CD8-positive, alpha-beta T cell (primary cell): ENCODE measurements at regions of chr1 and their contacts with region 1.

Region 1: GRCh38 chr1:33036526-33037503 is at the start of gene AK2:
- DNase-seq: peak; percentile 72 to 95 (median 86)
- ATAC-seq: peak; percentile 99
- H3K4me3 ChIP-seq: peak within 1 kb of the TSS; percentile 87 to 92
- H3K4me3 Mint-ChIP-seq: peak within 1 kb of the TSS; percentile 98
- H3K27ac ChIP-seq: peak within 1 kb of the TSS; percentile 57 to 76
- H3K27ac Mint-ChIP-seq: peak within 1 kb of the TSS; percentile 92
- H3K4me1 ChIP-seq: peaks cover 24% of the 10 kb centered on the region
- H3K4me1 Mint-ChIP-seq: peaks cover 45% of the 10 kb centered on the region
- H3K27me3 ChIP-seq: no peaks in the 10 kb centered on the region
- H3K27me3 Mint-ChIP-seq: no peaks in the 10 kb centered on the region
- CTCF ChIP-seq: no peak
- total RNA-seq, gene AK2: 24.3 to 24.9 TPM

Region 2: DNA sequence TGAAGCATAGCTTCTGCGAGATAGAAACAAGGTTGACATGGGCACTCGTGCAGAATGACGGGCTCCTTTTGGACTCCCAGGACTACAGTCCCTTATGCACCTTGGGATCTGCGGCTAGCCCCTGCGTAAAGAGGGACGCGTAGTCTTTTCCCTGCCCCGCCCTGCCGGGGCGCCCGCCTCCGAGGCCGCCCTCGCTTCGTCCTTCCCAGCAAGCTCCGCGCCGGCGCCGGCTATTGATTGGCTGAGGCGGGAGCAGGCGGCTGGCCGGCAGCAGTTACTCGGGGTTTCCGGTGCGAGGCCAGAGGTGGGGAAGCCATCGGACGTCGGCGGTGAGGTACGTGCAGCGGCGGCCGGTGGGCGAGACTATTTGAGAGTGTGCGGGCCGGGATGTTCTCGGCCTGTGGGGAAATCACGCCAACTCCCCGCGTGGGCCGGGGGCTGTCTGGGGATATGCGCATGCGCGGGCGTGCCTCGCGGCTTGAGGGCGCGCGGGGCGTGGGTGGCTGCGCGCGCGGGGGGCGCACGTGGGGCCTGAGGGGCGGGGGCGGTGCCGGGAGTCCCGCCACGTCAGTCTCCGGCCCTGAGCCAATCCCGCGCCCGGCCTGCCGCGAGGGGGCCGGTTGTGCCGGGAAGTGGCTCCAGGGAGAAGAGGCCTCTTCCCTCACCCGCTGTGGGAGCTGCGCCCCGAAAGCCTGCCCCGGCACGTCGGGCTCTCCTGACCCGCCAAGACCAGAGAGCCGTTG is 857.2 kb before region 1 on chr1 and contains the start of gene TXLNA:
- CTCF ChIA-PET with region 1: no interaction called
- POLR2A ChIA-PET with region 1: no interaction called
- intact Hi-C with region 1: loop called in 1 of 2 experiments (anchors 5 kb)
- DNase-seq: peak; percentile 66 to 93 (median 88)
- ATAC-seq: peak; percentile 88
- H3K4me3 ChIP-seq: peak within 1 kb of the TSS; percentile 67 to 85
- H3K4me3 Mint-ChIP-seq: peak within 1 kb of the TSS; percentile 84
- H3K27ac ChIP-seq: peak within 1 kb of the TSS; percentile 70 to 89
- H3K27ac Mint-ChIP-seq: peak within 1 kb of the TSS; percentile 93
- H3K4me1 ChIP-seq: peaks cover 26% of the 10 kb centered on the region
- H3K4me1 Mint-ChIP-seq: peaks cover 44% of the 10 kb centered on the region
- H3K27me3 ChIP-seq: no peaks in the 10 kb centered on the region
- H3K27me3 Mint-ChIP-seq: no peaks in the 10 kb centered on the region
- CTCF ChIP-seq: no peak
- total RNA-seq, gene TXLNA: 7.5 to 8.9 TPM

Region 3: DNA sequence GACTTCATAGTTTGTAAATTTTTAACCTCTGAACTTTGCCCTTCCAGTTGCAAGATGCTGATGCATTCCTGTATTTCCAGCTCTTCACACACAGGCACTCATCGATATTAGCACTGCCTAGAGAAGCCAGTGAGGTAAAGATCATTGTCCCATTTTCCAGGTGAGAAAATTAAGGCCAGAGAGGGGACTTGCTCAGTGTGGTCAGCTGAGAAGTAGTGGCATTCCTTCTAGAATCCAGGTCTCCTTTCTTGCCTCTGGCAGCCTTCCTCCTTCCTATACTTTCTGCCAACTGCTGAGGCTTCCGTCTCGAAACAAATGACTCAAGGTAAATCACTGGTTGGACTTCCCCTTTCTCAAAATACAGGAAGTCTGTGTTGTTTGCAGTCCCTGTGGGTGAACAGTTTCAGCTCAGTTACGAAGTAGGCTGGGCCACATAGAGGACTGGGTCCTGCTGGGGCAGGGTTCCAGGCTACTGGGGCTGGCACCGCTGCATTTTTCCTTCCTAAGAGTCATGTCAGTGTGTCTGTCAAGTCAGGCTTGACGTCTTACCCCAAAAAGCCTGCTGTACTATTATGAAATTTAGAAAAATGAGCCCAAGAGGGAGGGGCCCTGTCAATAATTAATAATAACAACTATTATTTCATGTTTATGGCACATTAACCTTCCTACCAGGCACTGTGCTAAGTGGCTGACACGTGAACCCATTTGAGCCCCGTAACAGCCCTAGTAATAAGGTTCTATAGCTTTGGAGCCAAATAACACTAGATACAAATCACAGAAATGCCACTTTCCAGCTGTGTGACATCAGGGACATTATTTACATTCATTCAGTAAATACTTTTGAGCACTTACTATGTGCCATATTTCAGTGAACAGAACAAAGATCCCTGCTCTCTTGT is 55.6 kb before region 1 on chr1:
- CTCF ChIA-PET with region 1: no interaction called
- POLR2A ChIA-PET with region 1: no interaction called
- intact Hi-C with region 1: loop called in 1 of 2 experiments (anchors 1 kb)
- DNase-seq: peak; percentile 23 to 90 (median 64)
- ATAC-seq: peak; percentile 98
- H3K4me3 ChIP-seq: peak overlapping the region; percentile 40
- H3K4me3 Mint-ChIP-seq: peak overlapping the region; percentile 68
- H3K27ac ChIP-seq: peak overlapping the region; percentile 49 to 94
- H3K27ac Mint-ChIP-seq: peak overlapping the region; percentile 90
- H3K4me1 ChIP-seq: peaks cover 18% of the 10 kb centered on the region
- H3K4me1 Mint-ChIP-seq: peaks cover 29% of the 10 kb centered on the region
- H3K27me3 ChIP-seq: no peaks in the 10 kb centered on the region
- H3K27me3 Mint-ChIP-seq: no peaks in the 10 kb centered on the region
- CTCF ChIP-seq: no peak

Region 4: DNA sequence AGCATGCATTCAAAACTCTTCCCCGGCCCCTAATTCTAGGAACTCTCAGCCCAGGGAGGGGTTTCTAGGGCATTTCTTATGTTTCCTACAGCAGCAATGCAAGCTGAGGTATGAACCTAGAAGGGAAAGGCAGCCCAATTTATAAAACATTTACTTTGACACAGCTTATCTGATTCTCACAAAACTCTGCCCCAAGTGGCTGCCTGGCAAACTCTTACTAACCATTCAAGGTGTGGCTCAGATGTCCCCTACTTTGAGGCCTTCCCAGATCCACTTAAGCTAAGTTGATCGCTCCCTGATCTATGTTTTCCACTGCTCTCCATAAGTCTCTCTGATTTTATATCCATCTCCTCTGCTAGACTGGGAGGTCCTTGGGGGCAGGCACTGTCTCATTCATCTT is 35.5 kb before region 1 on chr1:
- CTCF ChIA-PET with region 1: no interaction called
- POLR2A ChIA-PET with region 1: no interaction called
- intact Hi-C with region 1: no loop called
- DNase-seq: peak in 1 of 9 experiments; percentile 22
- ATAC-seq: no peak
- H3K4me3 ChIP-seq: no peak overlapping the region
- H3K4me3 Mint-ChIP-seq: no peak overlapping the region
- H3K27ac ChIP-seq: no peak overlapping the region
- H3K27ac Mint-ChIP-seq: no peak overlapping the region
- H3K4me1 ChIP-seq: no peaks in the 10 kb centered on the region
- H3K4me1 Mint-ChIP-seq: peaks cover 17% of the 10 kb centered on the region
- H3K27me3 ChIP-seq: no peaks in the 10 kb centered on the region
- H3K27me3 Mint-ChIP-seq: no peaks in the 10 kb centered on the region
- CTCF ChIP-seq: peak; percentile 29

Region 5: GRCh38 chr1:33094971-33095604 is 58.3 kb after region 1 on chr1:
- CTCF ChIA-PET with region 1: no interaction called
- POLR2A ChIA-PET with region 1: no interaction called
- intact Hi-C with region 1: loop called in 1 of 2 experiments (anchors 5 kb)
- DNase-seq: peak in 4 of 9 experiments; percentile 29 to 53 (median 36)
- ATAC-seq: no peak
- H3K4me3 ChIP-seq: no peak overlapping the region
- H3K4me3 Mint-ChIP-seq: no peak overlapping the region
- H3K27ac ChIP-seq: no peak overlapping the region
- H3K27ac Mint-ChIP-seq: no peak overlapping the region
- H3K4me1 ChIP-seq: peaks cover 44% of the 10 kb centered on the region
- H3K4me1 Mint-ChIP-seq: peaks cover 37% of the 10 kb centered on the region
- H3K27me3 ChIP-seq: no peaks in the 10 kb centered on the region
- H3K27me3 Mint-ChIP-seq: no peaks in the 10 kb centered on the region
- CTCF ChIP-seq: peak; percentile 79

Region 6: DNA sequence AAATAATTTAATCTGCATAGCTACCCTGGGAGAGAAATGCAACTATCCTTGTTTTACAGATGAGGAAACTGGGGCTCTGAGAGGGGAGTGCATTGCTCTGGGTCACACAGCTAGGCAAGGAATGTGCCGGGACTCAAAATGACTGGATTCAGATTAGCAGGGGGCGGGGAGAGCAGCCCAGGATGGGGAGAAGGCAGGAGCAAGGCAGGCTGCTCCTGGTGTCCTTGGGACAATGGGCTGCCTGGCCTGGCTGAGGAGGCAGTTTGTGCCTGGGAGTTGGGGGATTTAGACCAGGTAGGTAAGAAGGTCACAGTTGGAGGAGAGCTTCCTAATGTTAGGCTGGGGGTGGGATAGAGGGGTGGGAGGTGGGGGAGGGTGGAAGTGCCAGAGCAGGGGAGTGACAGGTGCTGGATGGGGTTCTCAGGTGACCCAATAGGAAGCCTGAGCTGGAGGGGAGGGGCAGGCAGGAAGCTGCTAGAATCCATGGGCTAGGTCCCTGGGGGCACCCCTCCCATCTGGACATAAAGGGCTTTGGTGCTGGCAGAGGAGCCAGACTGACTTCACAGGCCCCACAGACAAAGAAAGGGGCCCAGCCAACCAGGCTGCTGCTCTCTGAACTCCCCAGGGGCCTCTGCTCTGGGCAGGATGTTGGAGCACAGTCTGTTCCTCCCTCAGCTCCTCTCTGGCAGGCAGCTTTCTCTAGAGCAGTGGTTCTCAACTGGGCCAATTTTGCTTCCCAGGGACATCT is 116.0 kb after region 1 on chr1:
- CTCF ChIA-PET with region 1: no interaction called
- POLR2A ChIA-PET with region 1: no interaction called
- intact Hi-C with region 1: no loop called
- DNase-seq: no peak
- ATAC-seq: no peak
- H3K4me3 ChIP-seq: no peak overlapping the region
- H3K4me3 Mint-ChIP-seq: no peak overlapping the region
- H3K27ac ChIP-seq: no peak overlapping the region
- H3K27ac Mint-ChIP-seq: peak overlapping the region; percentile 55
- H3K4me1 ChIP-seq: no peaks in the 10 kb centered on the region
- H3K4me1 Mint-ChIP-seq: no peaks in the 10 kb centered on the region
- H3K27me3 ChIP-seq: no peaks in the 10 kb centered on the region
- H3K27me3 Mint-ChIP-seq: no peaks in the 10 kb centered on the region
- CTCF ChIP-seq: no peak

Region 7: GRCh38 chr1:33256701-33257399 is 220.0 kb after region 1 on chr1:
- CTCF ChIA-PET with region 1: no interaction called
- POLR2A ChIA-PET with region 1: no interaction called
- intact Hi-C with region 1: loop called in 1 of 2 experiments (anchors 10 kb)
- DNase-seq: peak; percentile 13 to 73 (median 55)
- ATAC-seq: peak; percentile 65
- H3K4me3 ChIP-seq: peak overlapping the region; percentile 62 to 75
- H3K4me3 Mint-ChIP-seq: peak overlapping the region; percentile 99
- H3K27ac ChIP-seq: peak overlapping the region; percentile 48 to 51
- H3K27ac Mint-ChIP-seq: peak overlapping the region; percentile 97
- H3K4me1 ChIP-seq: peaks cover 42% of the 10 kb centered on the region
- H3K4me1 Mint-ChIP-seq: peaks cover 47% of the 10 kb centered on the region
- H3K27me3 ChIP-seq: no peaks in the 10 kb centered on the region
- H3K27me3 Mint-ChIP-seq: no peaks in the 10 kb centered on the region
- CTCF ChIP-seq: no peak

Region 8: DNA sequence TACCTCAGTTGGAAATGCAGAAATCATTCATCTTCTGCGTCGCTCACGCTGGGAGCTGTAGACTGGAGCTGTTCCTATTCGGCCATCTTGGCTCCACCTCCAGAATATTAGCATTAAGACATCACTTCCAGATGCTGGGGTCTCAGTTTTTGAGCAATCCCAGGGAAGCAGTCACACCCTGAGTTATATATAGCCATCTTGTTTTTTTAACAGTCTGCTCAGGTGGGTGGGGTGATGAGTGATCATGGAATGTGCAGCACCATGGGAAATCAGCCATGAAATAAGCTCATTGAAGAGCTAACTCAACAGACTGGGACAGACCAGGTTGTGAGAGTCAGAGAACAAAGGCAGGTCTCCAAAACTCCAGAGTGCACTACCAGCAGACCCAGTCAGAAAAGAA is 800.1 kb after region 1 on chr1:
- CTCF ChIA-PET with region 1: no interaction called
- POLR2A ChIA-PET with region 1: no interaction called
- intact Hi-C with region 1: no loop called
- DNase-seq: no peak
- ATAC-seq: no peak
- H3K4me3 ChIP-seq: no peak overlapping the region
- H3K4me3 Mint-ChIP-seq: no peak overlapping the region
- H3K27ac ChIP-seq: no peak overlapping the region
- H3K27ac Mint-ChIP-seq: no peak overlapping the region
- H3K4me1 ChIP-seq: no peaks in the 10 kb centered on the region
- H3K4me1 Mint-ChIP-seq: no peaks in the 10 kb centered on the region
- H3K27me3 ChIP-seq: peaks cover 0 to 7% of the 10 kb centered on the region in 2 experiments
- H3K27me3 Mint-ChIP-seq: no peaks in the 10 kb centered on the region
- CTCF ChIP-seq: no peak